ENCODE measurements at regions of chr7 and their contacts with region 1.

Region 1: GRCh38 chr7:79361214-79361613 is 92.3 kb downstream of the MAGI2 start:
- DNase-seq: peak; percentile 12
- H3K4me3 ChIP-seq: no peak overlapping the region
- H3K27ac ChIP-seq: no peak overlapping the region
- H3K4me1 ChIP-seq: no peaks in the 10 kb centered on the region
- H3K27me3 ChIP-seq: no peaks in the 10 kb centered on the region
- CTCF ChIP-seq: peak; percentile 41 to 44

Region 2: GRCh38 chr7:79329464-79329863 is 31.8 kb before region 1 on chr7:
- CTCF ChIA-PET with region 1: no interaction called
- dilution Hi-C with region 1: no loop called
- in situ Hi-C with region 1: no loop called
- intact Hi-C with region 1: loop called (anchors 5 kb)
- DNase-seq: no peak
- H3K4me3 ChIP-seq: no peak overlapping the region
- H3K27ac ChIP-seq: no peak overlapping the region
- H3K4me1 ChIP-seq: no peaks in the 10 kb centered on the region
- H3K27me3 ChIP-seq: no peaks in the 10 kb centered on the region
- CTCF ChIP-seq: no peak